GM10248 (cell line): ENCODE measurements at regions of chr14 and their contacts with region 1.

Region 1: DNA sequence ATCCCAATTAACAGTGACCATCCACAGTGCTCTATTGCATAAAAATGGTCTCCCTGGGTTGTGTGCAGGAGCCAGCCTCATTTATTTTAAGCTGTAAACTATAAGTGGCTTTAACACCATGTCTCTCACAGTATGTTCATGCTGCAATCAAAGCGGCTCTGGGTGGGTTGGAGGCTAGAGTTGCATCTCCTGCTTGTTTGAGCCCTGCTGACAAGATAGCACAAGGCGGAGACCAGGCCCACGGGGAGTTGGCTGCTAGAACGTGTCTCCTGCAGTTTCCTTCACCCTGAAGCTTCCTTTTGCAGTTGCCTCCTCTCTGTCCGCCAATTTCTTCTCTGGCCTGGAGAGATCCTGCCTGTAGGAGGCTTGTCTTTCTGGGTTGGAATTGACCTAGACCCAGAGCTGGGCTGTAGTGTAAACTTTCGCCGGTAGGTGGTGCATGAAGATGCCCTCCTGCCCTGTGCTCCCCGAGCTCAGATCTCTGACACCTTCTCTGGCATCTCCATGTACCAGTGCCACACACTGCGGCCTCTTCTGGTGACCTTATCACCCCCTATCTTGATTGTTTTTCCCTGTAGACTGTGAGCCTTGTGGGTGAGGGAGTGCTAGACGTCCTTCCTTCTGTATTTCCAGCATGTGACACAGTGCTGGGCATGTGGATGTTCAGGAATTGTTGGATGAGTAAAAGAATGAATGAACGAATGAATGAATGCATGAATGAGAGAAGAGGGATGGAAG is 10.3 kb downstream of the OTUB2 start:
- DNase-seq: peak; percentile 84
- CTCF ChIP-seq: peak; percentile 75

Region 2: GRCh38 chr14:94026173-94026888 is 10.2 kb before region 1 on chr14 and contains the start of gene OTUB2:
- CTCF ChIA-PET with region 1: interaction called, 151 read pairs
- POLR2A ChIA-PET with region 1: no interaction called
- DNase-seq: peak; percentile 100
- CTCF ChIP-seq: no peak

Region 3: GRCh38 chr14:94056579-94057308 is 20.3 kb after region 1 on chr14:
- CTCF ChIA-PET with region 1: interaction called, 36 read pairs
- POLR2A ChIA-PET with region 1: no interaction called
- DNase-seq: no peak
- CTCF ChIP-seq: no peak

Region 4: GRCh38 chr14:94080471-94081289 is 44.2 kb after region 1 on chr14 and contains the start of gene DDX24:
- CTCF ChIA-PET with region 1: interaction called, 25 read pairs
- POLR2A ChIA-PET with region 1: no interaction called
- DNase-seq: peak; percentile 98
- CTCF ChIP-seq: no peak

Region 5: DNA sequence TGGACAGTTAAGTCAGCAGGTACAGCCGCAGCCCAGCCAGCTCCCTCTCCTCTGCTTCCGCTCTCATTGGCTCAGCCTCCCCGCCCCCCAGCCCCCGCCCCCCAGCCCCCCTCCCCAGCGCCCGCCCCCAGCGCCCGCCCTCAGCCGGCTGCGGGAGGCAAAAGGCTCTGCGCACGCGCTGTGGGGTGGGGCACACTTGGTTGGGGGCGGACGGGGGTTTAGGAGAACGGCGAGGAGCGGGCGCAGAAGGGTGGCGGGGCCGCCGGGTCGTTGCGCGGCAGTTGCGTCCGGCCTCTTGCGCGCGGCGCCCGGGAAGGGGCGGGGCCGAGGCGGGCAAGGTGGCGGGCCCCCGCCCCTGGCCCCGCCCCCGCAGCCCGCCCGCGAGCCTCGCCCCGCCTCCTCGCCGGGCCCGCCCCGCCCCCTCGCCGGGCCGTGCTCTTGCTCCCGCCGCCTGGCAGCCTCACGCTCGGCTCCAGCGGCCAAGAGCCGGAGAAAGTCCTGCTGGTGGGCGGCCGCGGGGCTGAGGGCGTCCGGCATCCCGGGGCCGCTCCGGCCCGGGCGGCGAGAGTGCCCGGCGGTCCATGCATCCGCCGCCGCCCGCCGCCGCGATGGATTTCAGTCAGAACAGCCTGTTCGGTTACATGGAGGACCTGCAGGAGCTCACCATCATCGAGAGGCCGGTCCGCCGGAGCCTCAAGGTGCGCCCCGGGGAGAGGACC is 137.6 kb after region 1 on chr14 and contains the start of gene PPP4R4:
- CTCF ChIA-PET with region 1: interaction called, 32 read pairs
- POLR2A ChIA-PET with region 1: no interaction called
- DNase-seq: peak; percentile 93
- CTCF ChIP-seq: no peak